B cell (primary cell): ENCODE measurements at regions of chr13 and their contacts with region 1.

Region 1: DNA sequence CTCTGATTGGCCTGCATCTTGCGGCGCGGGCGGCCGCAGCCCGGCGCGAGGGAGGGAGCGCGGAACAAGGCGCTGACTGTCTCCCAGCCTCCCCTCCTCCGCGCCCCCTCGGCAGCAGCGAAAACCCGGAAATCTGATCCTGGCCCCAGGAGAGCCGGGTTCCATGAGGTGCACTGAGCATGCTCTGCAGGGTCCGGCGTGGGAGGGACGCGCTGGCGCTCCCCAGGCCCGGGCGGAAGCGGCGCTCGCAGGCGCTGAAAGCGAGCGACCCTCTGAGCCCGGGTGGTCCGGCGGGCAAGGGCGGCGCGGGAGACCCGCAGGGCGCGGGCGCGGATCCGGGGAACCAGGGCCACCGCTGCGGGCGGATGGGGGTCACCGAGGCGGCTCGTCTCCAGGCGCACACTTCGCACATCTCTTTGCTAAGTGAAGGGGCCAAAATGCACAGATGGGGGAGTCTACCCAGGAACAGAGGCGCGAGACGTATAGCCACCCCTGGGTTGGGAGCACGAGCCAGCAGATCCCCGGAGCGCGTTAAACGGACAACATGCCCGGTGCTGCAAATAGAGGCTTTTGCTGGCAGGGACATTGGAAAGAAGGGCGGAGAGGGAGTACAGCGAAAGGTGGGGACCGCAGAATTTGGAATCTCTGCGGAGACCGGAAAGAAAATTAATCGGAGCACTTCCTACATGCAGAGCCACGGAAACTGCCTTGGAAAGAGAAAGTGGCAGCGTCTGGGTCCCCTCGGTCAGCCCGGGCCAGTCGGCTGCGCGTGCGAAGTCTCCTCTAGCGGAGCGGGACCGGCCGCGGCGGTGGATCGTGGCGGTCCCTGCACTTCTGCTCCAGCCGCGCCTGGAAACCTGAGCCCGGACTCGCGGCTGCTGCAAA is 510 bp upstream of the PCDH9 start:
- DNase-seq: peak; percentile 93
- ATAC-seq: peak; percentile 92
- H3K4me3 ChIP-seq: peak overlapping the region; percentile 79 to 94 (median 92)
- H3K4me3 Mint-ChIP-seq: no peak overlapping the region
- H3K27ac ChIP-seq: peak overlapping the region; percentile 31 to 74
- H3K27ac Mint-ChIP-seq: no peak overlapping the region
- H3K4me1 ChIP-seq: peaks cover 20 to 27% of the 10 kb centered on the region in 2 donors
- H3K4me1 Mint-ChIP-seq: peaks cover 18% of the 10 kb centered on the region
- H3K27me3 ChIP-seq: peaks cover 0 to 7% (median 3%) of the 10 kb centered on the region in 4 experiments
- H3K27me3 Mint-ChIP-seq: peaks cover 5% of the 10 kb centered on the region
- CTCF ChIP-seq: peak; percentile 4

Region 2: GRCh38 chr13:66492479-66492878 is 738.2 kb before region 1 on chr13:
- CTCF ChIA-PET with region 1: no interaction called
- POLR2A ChIA-PET with region 1: no interaction called
- intact Hi-C with region 1: loop called (anchors 5 kb)
- DNase-seq: peak; percentile 13
- ATAC-seq: no peak
- H3K4me3 ChIP-seq: no peak overlapping the region
- H3K4me3 Mint-ChIP-seq: no peak overlapping the region
- H3K27ac ChIP-seq: no peak overlapping the region
- H3K27ac Mint-ChIP-seq: no peak overlapping the region
- H3K4me1 ChIP-seq: no peaks in the 10 kb centered on the region
- H3K4me1 Mint-ChIP-seq: peaks cover 4% of the 10 kb centered on the region
- H3K27me3 ChIP-seq: no peaks in the 10 kb centered on the region
- H3K27me3 Mint-ChIP-seq: no peaks in the 10 kb centered on the region
- CTCF ChIP-seq: peak; percentile 37

Region 3: GRCh38 chr13:66657165-66657881 is 573.3 kb before region 1 on chr13:
- CTCF ChIA-PET with region 1: no interaction called
- POLR2A ChIA-PET with region 1: no interaction called
- intact Hi-C with region 1: loop called (anchors 5 kb)
- DNase-seq: no peak
- ATAC-seq: no peak
- H3K4me3 ChIP-seq: no peak overlapping the region
- H3K4me3 Mint-ChIP-seq: peak overlapping the region; percentile 36
- H3K27ac ChIP-seq: peak overlapping the region in 1 of 2 donors; percentile 53
- H3K27ac Mint-ChIP-seq: peak overlapping the region; percentile 54
- H3K4me1 ChIP-seq: peaks cover 30 to 40% of the 10 kb centered on the region in 2 donors
- H3K4me1 Mint-ChIP-seq: peaks cover 44% of the 10 kb centered on the region
- H3K27me3 ChIP-seq: no peaks in the 10 kb centered on the region
- H3K27me3 Mint-ChIP-seq: no peaks in the 10 kb centered on the region
- CTCF ChIP-seq: no peak

Region 4: GRCh38 chr13:66830940-66831716 is 399.5 kb before region 1 on chr13:
- CTCF ChIA-PET with region 1: no interaction called
- POLR2A ChIA-PET with region 1: no interaction called
- intact Hi-C with region 1: loop called (anchors 5 kb)
- DNase-seq: peak; percentile 60
- ATAC-seq: peak; percentile 47
- H3K4me3 ChIP-seq: peak overlapping the region in 1 of 5 experiments; percentile 22
- H3K4me3 Mint-ChIP-seq: peak overlapping the region; percentile 68
- H3K27ac ChIP-seq: peak overlapping the region; percentile 49 to 74
- H3K27ac Mint-ChIP-seq: peak overlapping the region; percentile 79
- H3K4me1 ChIP-seq: peaks cover 10 to 14% of the 10 kb centered on the region in 2 donors
- H3K4me1 Mint-ChIP-seq: peaks cover 21% of the 10 kb centered on the region
- H3K27me3 ChIP-seq: no peaks in the 10 kb centered on the region
- H3K27me3 Mint-ChIP-seq: no peaks in the 10 kb centered on the region
- CTCF ChIP-seq: no peak

Region 5: GRCh38 chr13:66994097-66994496 is 236.5 kb before region 1 on chr13:
- CTCF ChIA-PET with region 1: interaction called, 4 read pairs
- POLR2A ChIA-PET with region 1: no interaction called
- intact Hi-C with region 1: loop called (anchors 2 kb)
- DNase-seq: peak; percentile 68
- ATAC-seq: peak; percentile 60
- H3K4me3 ChIP-seq: peak overlapping the region in 3 of 5 experiments; percentile 4 to 36 (median 10)
- H3K4me3 Mint-ChIP-seq: peak overlapping the region; percentile 58
- H3K27ac ChIP-seq: peak overlapping the region; percentile 84 to 90
- H3K27ac Mint-ChIP-seq: peak overlapping the region; percentile 93
- H3K4me1 ChIP-seq: peaks cover 41 to 53% of the 10 kb centered on the region in 2 donors
- H3K4me1 Mint-ChIP-seq: peaks cover 46% of the 10 kb centered on the region
- H3K27me3 ChIP-seq: no peaks in the 10 kb centered on the region
- H3K27me3 Mint-ChIP-seq: no peaks in the 10 kb centered on the region
- CTCF ChIP-seq: peak; percentile 53